ENCODE measurements at regions of chr1 and their contacts with region 1.

Region 1: GRCh38 chr1:67803380-67804279 is 29.6 kb downstream of the GNG12 start:
- DNase-seq: no peak
- H3K4me3 ChIP-seq: no peak overlapping the region
- H3K27ac ChIP-seq: no peak overlapping the region
- H3K4me1 ChIP-seq: peaks cover 0 to 3% (median 0%) of the 10 kb centered on the region in 4 experiments; a peak in 2 of 7 replicates
- H3K27me3 ChIP-seq: no peaks in the 10 kb centered on the region
- CTCF ChIP-seq: no peak
- EP300 ChIP-seq: no peak
- POLR2A ChIP-seq: no peak
- RAD21 ChIP-seq: no peak

Region 2: DNA sequence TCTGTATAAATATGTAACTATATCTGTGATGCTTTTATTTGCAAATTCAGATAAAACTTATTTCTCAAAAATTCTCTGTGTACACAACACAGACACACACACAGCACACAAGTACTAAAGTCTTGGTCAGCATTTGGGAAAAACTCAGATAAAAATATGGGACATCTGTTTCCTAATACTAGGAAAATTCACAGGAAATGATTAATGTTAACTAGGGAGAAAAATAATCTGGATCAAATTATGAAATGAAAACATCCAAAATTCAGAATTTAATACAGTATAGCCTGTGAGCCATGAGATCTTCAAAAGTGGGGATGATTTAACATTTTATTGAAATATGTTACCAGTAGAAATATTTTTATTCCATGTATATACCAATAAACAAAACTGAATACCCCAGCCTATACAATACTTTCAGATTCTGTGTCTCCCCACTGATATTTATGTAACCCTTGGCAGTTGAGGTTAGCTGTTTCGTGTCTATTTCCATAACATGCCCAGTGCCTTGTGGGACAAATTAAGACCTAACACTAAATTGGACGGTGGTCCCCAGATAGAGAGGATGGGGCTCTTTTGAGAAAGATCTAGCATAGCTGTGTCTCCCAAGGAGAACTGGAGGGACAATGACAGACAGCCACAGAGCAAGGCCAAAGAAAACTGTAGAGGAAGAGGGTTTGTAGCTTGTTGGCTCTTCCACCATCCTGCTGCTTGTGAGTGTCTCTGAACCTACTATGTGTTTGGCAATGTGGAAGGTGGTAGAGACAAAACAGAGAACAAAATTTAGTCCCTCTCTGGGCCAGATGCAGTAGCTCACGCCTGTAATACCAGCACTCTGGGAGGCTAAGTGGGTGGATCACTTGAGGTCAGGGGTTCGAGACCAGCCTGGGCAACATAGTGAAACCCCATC is 17.5 kb before region 1 on chr1:
- CTCF ChIA-PET with region 1: interaction called, 13 read pairs
- POLR2A ChIA-PET with region 1: no interaction called
- DNase-seq: no peak
- H3K4me3 ChIP-seq: no peak overlapping the region
- H3K27ac ChIP-seq: no peak overlapping the region
- H3K4me1 ChIP-seq: no peaks in the 10 kb centered on the region
- H3K27me3 ChIP-seq: no peaks in the 10 kb centered on the region
- CTCF ChIP-seq: no peak
- EP300 ChIP-seq: no peak
- POLR2A ChIP-seq: no peak
- RAD21 ChIP-seq: no peak

Region 3: DNA sequence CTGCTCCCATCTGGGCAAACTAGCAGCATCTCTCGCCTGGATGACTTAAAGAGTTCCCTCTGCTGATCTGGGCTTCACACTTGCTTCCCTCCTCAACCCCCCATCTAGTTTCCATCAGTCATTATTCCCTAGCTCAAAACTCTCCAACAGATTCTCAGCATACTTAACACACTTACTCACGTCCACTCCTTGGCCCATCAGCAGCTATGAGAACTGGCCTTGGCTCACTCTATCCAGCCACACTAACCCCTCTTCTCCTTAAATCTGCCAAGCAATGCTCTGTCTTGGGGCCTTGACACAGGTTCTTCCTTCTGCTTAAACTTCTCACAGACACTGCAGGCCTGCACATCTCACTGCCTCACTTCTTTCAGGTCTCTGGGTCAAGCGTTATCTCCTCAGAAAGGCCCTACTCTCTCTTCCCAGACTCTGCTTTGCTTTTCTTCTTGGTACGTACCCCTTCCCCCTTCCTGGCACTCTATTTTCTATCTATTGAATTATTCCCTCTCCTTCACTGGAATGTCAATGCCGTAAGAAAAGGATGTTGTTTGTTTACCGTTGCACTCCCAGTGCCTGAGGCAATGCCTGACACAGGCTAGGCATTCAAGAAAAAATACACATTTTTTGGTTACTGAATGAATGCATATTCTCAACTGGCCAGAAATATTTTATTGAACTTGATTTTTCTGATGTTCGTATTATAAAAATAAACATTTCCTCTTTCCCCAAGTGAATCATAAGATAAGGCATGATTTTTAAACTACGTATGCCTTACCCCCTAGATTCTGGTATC is 11.7 kb before region 1 on chr1:
- CTCF ChIA-PET with region 1: interaction called, 13 read pairs
- POLR2A ChIA-PET with region 1: interaction called, 3 read pairs
- DNase-seq: no peak
- H3K4me3 ChIP-seq: no peak overlapping the region
- H3K27ac ChIP-seq: no peak overlapping the region
- H3K4me1 ChIP-seq: peaks cover 0 to 7% (median under 1%) of the 10 kb centered on the region in 4 experiments; a peak in 3 of 7 replicates
- H3K27me3 ChIP-seq: no peaks in the 10 kb centered on the region
- CTCF ChIP-seq: no peak
- EP300 ChIP-seq: no peak
- POLR2A ChIP-seq: no peak
- RAD21 ChIP-seq: no peak